IMR-90 (cell line): ENCODE measurements at regions of chr18 and their contacts with region 1.

Region 1: DNA sequence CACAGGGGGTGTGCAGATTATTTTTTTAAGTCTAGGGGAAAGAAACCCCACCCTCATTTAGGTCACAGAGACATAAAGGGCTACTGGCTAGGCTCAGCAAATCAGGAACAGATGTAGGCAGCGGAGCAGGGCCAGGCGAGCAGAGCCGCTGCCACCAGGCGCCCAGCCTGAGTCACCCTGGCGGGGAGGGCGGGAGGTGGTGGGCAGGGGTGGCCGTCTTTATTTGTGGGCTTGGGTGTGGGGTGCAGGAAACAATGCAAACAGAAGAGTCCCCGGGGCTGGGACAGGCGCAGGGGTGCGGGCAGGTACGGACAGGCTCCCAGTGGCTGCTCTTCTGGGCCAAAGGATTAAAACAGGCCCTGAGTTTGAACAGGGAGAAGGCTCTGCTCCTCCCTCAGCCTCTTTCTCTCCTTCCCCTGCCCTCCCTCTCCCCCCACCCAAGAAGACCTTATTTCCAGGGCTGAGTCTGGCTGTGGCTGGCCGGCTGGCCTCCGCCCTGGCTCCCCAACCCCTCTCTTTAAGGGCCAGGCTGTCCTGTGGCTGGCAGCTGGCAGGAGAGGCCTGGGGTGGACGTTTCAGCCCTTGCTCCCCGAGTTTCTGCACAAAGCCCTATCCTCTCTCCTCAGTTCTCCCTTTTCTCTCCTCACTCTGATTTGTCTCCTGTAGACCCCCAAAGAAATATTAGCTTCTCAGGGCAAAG is 142.9 kb upstream of the SMAD2 start:
- DNase-seq: no peak
- ATAC-seq: no peak
- H3K4me3 ChIP-seq: no peak overlapping the region
- H3K27ac ChIP-seq: no peak overlapping the region
- H3K4me1 ChIP-seq: no peaks in the 10 kb centered on the region
- H3K27me3 ChIP-seq: peaks cover 11% of the 10 kb centered on the region
- CTCF ChIP-seq: no peak
- POLR2A ChIP-seq: no peak
- RAD21 ChIP-seq: no peak

Region 2: DNA sequence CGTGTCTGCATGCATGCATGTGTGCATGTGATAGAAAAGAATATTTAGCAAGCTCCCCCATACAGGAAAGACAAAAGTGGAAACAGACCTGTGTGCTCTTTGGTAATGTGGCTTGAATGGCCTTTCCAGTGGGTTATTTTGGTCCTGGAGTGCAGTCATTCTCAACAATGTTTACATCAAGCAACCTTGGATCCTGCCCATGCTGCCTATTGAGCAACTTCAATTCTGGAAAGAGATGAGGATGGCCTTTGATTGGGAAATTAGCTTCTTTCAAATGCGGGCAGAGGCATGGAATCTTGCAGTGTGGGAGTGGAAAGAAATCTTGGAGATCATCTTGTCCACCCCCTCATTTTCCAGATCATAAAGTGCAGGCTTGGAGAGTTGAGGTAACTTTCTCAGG is 55.7 kb before region 1 on chr18:
- CTCF ChIA-PET with region 1: no interaction called
- POLR2A ChIA-PET with region 1: no interaction called
- dilution Hi-C with region 1: no loop called
- in situ Hi-C with region 1: no loop called
- intact Hi-C with region 1: loop called (anchors 10 kb)
- DNase-seq: peak; percentile 16
- ATAC-seq: no peak
- H3K4me3 ChIP-seq: no peak overlapping the region
- H3K27ac ChIP-seq: no peak overlapping the region
- H3K4me1 ChIP-seq: no peaks in the 10 kb centered on the region
- H3K27me3 ChIP-seq: peaks cover 20% of the 10 kb centered on the region
- CTCF ChIP-seq: no peak
- POLR2A ChIP-seq: no peak
- RAD21 ChIP-seq: no peak